SK-N-SH (cell line): ENCODE measurements at regions of chr5 and their contacts with region 1.

Region 1: GRCh38 chr5:1140171-1140817 is 28.4 kb upstream of the SLC12A7 start:
- DNase-seq: peak; percentile 87
- H3K4me3 ChIP-seq: no peak overlapping the region
- H3K27ac ChIP-seq: no peak overlapping the region
- H3K4me1 ChIP-seq: no peaks in the 10 kb centered on the region; a peak in 1 of 4 replicates
- H3K27me3 ChIP-seq: no peaks in the 10 kb centered on the region
- CTCF ChIP-seq: peak; percentile 62
- EP300 ChIP-seq: no peak
- RAD21 ChIP-seq: peak; percentile 75

Region 2: GRCh38 chr5:932628-933250 is 207.6 kb before region 1 on chr5:
- CTCF ChIA-PET with region 1: interaction called, 19 read pairs
- POLR2A ChIA-PET with region 1: no interaction called
- DNase-seq: no peak
- H3K4me3 ChIP-seq: no peak overlapping the region
- H3K27ac ChIP-seq: no peak overlapping the region
- H3K4me1 ChIP-seq: no peaks in the 10 kb centered on the region
- H3K27me3 ChIP-seq: peaks cover 12% of the 10 kb centered on the region
- CTCF ChIP-seq: no peak
- EP300 ChIP-seq: no peak
- RAD21 ChIP-seq: no peak

Region 3: DNA sequence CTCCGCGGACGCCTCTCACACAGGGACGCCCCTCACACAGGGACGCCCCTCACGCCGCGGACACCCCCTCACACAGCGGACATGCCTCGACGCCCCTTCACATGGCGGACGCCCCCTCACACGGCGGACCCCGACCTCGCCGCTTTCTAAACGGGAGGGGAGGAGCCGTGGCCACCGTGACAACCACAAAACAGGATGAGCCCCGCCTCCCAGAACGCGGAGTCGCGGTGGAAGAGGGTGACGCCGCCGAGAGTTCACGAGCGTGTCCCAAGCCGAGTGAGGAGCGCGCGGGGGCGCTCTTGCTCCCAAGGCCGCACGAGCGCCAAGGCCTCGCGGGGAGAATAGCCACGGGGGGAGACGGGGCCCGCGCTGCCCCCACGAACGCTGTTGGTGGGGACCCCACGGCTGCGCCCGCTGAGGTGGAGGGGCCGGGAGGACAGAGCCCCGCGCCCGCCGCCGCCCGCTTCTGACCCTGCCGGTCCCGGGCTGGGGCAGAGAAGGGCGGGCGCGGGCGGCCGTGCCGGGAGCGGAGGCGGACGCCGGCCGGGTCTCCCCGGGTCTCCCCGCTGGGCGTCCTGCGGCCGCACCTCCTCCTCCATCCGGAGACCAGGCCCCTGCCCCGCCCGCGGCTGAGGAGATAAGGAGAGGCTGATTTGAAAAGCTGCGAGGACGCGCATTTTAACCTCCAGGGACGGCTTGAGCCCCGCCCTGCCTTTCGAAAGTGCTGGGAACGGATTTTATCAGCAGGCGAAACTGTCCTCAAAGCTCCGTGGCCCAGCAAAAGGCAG is 135.6 kb before region 1 on chr5:
- CTCF ChIA-PET with region 1: interaction called, 44 read pairs
- POLR2A ChIA-PET with region 1: no interaction called
- DNase-seq: peak; percentile 78
- H3K4me3 ChIP-seq: peak overlapping the region; percentile 31 to 37; a peak in 2 of 4 replicates
- H3K27ac ChIP-seq: no peak overlapping the region
- H3K4me1 ChIP-seq: peaks cover 0 to 2% of the 10 kb centered on the region in 2 experiments; a peak in 1 of 4 replicates
- H3K27me3 ChIP-seq: peaks cover 54% of the 10 kb centered on the region
- CTCF ChIP-seq: no peak; the same call in 1 of the 2 replicates
- EP300 ChIP-seq: no peak
- RAD21 ChIP-seq: peak; percentile 19; the same call in 1 of the 2 replicates

Region 4: GRCh38 chr5:1125030-1125357 is 15.3 kb before region 1 on chr5:
- CTCF ChIA-PET with region 1: interaction called, 10 read pairs
- POLR2A ChIA-PET with region 1: no interaction called
- DNase-seq: peak; percentile 93
- H3K4me3 ChIP-seq: no peak overlapping the region
- H3K27ac ChIP-seq: peak overlapping the region in 1 of 2 experiments; percentile 54; a peak in 2 of 4 replicates
- H3K4me1 ChIP-seq: peaks cover 0 to 30% of the 10 kb centered on the region in 2 experiments; a peak in 1 of 4 replicates
- H3K27me3 ChIP-seq: peaks cover 4% of the 10 kb centered on the region; the same call in 1 of the 2 replicates
- CTCF ChIP-seq: no peak
- EP300 ChIP-seq: peak in 1 of 2 experiments; percentile 86; a peak in 2 of 4 replicates
- RAD21 ChIP-seq: peak; percentile 18; the same call in 1 of the 2 replicates